ENCODE measurements at regions of chrX and their contacts with region 1.

Region 1: DNA sequence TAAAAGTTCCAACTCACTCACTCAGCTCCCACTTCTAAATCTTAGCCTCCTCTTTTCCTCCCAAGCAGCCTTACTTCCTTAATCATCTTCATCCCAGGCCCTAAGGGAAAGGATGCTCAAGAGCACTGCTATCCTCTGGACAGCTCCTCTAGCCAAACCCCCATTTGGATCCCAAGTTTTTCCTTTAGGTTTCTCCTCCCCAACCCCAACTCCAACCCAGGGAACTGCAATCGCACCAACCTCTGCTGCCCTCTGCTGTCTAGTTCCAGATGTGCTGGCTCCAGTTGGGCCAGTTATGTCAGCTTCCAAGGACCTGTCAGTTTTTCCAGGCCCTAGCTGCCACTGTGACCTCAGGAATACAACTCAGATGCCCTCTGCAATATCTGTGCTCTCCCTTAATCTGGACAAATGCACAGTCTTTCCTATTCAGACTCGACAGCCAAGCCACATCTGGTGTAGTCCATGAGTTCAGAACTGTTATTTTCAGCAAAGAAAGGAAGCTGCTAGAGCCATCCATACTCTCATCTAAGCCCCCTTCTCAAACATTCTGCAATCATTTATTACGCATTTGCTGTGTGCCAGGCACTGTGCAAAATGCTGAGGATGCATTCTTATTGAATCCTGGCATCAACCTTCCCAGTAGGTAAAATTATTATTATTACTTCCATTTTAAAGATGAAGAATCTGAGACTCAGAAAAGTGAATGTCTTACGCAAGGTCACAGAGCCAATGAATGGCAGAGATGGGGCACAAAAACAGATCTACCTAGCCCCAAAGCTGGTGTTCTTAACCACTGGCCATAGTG is 12.3 kb upstream of the XPNPEP2 start:
- DNase-seq: peak; percentile 70 to 86
- ATAC-seq: peak; percentile 74
- H3K4me3 ChIP-seq: no peak overlapping the region
- H3K27ac ChIP-seq: no peak overlapping the region
- H3K4me1 ChIP-seq: no peaks in the 10 kb centered on the region
- H3K27me3 ChIP-seq: no peaks in the 10 kb centered on the region

Region 2: DNA sequence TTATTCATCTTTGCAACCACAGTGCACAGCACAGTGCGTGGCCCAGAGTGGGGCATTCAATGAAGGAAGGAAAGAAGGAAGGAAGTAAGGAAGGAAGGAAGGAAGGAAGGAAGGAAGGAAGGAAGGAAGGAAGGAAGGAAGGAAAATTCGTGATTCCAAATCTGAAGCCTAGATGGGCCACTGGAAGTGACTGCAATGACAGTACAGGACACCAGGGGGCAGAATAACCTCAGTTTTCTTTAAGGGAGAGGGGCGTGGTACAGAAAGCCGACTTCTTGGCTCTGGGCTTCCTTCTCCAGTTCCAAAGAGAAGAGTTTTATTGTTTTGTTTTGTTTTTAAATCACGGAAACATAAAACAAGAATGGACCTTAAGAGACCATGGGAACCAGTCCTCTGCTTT is 119.6 kb before region 1 on chrX:
- intact Hi-C with region 1: loop called (anchors 10 kb)
- DNase-seq: no peak
- ATAC-seq: peak; percentile 71
- H3K4me3 ChIP-seq: no peak overlapping the region
- H3K27ac ChIP-seq: no peak overlapping the region
- H3K4me1 ChIP-seq: no peaks in the 10 kb centered on the region
- H3K27me3 ChIP-seq: no peaks in the 10 kb centered on the region

Region 3: DNA sequence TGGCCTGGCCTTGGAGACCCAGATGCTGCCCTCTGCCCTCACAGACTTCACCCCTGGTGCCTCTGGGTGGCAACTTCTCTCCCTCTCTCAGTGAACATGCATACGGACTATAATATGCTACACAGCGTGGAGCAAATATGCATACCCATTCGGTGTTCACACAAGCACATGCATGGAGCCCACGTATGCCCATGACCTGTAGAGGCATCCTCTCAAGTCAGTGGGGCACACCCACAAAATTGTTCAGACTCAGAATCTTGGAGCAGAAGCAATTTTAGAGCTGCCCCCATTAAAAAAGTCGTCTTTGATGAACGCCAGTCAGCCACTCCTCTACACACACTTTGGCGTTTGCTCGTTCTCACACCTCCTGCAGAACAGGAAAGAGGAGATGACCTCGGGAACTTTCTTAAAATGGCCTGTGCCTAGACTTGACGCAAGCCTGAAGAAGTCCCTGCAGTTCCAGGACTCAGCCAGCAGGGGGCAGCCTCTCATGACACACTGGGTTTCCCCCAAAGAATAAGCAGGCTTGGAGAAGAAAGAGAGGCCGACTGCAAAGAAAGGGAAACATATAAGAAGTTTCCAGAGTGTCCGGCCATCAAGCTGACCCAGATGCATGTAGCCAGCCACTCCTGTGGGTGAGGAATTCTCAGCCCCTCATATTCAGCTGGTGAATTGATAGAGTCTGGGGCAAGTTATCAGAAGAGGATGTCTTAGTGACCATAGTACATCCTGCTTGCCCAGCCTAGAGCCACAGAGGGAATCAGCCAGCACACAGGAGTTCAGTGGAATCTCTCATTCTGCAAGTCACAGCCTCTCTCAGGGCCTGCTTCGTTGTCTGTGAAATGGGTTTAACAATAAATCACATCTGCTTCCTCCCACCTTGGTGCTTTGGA is 89.0 kb before region 1 on chrX:
- intact Hi-C with region 1: loop called (anchors 1 kb)
- DNase-seq: peak; percentile 75 to 90
- ATAC-seq: peak; percentile 80
- H3K4me3 ChIP-seq: no peak overlapping the region
- H3K27ac ChIP-seq: no peak overlapping the region
- H3K4me1 ChIP-seq: no peaks in the 10 kb centered on the region
- H3K27me3 ChIP-seq: no peaks in the 10 kb centered on the region

Region 4: GRCh38 chrX:129654419-129655165 is 71.9 kb before region 1 on chrX and contains the start of gene APLN:
- intact Hi-C with region 1: loop called in 1 of 2 experiments (anchors 1 kb)
- DNase-seq: peak; percentile 77 to 84
- ATAC-seq: peak; percentile 56
- H3K4me3 ChIP-seq: peak within 1 kb of the TSS in 1 of 2 donors; percentile 38
- H3K27ac ChIP-seq: no peak within 1 kb of the TSS
- H3K4me1 ChIP-seq: no peaks in the 10 kb centered on the region
- H3K27me3 ChIP-seq: no peaks in the 10 kb centered on the region
- total RNA-seq, gene APLN: 11.0 to 24.0 TPM

Measured in aorta (tissue), 5 donors.